Activated B cell treated with CpG ODN at 0.5 μM for 24 hours (primary cell): ENCODE measurements at regions of chr3 and their contacts with region 1.

Region 1: DNA sequence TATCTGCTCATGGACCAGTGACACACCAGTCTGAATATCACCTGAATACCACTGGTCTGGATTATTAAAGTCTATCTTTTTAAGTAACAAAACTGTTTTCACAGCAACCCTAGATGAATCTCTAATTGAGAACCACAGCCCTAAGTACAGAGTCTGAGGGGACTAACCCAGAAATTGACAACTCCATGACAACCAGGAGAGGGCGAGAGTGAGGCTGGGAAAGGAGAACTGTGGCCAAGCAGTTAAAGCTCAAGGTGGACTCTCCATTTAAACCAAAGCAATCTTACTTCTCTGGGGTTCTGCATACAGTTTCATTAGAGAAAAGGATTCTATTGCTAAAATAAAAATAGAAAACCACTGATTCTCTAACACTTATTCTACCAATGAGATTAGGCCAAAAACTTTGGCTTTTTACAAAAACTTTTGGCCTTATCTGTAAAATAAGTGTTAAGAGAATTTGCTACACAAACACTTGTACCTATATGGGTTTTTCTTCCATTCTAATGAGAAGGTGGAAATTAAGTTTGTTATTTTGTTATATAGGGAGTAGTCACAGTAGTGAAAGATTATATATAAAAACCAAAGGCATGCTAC is 11.4 kb downstream of the NEK10 start:
- DNase-seq: no peak
- ATAC-seq: peak; percentile 96
- H3K4me3 Mint-ChIP-seq: no peak overlapping the region
- H3K27ac Mint-ChIP-seq: no peak overlapping the region
- H3K4me1 Mint-ChIP-seq: peaks cover 37% of the 10 kb centered on the region
- H3K27me3 Mint-ChIP-seq: no peaks in the 10 kb centered on the region
- CTCF ChIP-seq: no peak

Region 2: GRCh38 chr3:27333843-27334242 is 23.9 kb before region 1 on chr3:
- CTCF ChIA-PET with region 1: no interaction called
- POLR2A ChIA-PET with region 1: no interaction called
- intact Hi-C with region 1: no loop called
- DNase-seq: no peak
- ATAC-seq: no peak
- H3K4me3 Mint-ChIP-seq: no peak overlapping the region
- H3K27ac Mint-ChIP-seq: no peak overlapping the region
- H3K4me1 Mint-ChIP-seq: no peaks in the 10 kb centered on the region
- H3K27me3 Mint-ChIP-seq: no peaks in the 10 kb centered on the region
- CTCF ChIP-seq: no peak

Region 3: DNA sequence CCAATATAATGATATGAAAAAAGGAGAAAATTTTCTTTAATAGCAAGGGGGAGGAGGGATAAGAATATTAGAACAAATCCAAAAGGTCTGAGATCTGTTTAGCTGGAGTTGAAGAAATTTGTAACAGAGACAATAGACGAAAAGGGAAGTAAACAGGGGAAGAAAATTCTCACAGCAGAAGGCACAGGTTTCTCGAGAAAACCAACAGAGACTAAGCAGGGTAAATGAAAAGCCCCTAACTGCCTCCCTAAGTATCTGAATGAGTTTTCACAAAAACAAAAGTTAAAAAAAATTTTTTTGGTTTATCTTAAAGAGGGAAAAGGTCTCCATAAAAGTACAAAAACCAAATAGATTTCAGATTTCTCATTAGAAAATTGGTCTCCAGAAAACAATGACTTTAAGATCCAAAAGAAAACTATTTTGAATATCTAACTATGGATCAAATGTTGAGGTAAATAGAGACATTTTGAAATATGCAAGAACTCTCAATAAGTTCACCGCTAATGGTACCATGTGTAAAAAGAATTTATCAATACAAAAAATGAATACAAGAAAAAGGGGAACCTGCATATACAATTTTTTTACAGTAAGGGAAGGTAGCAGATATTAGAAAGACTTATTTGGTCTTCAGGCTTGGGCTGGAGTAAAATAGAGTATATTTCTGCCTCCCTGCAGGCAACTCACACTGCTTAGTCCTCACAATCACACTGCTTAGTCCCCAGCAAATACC is 35.4 kb after region 1 on chr3:
- CTCF ChIA-PET with region 1: no interaction called
- POLR2A ChIA-PET with region 1: no interaction called
- intact Hi-C with region 1: loop called (anchors 5 kb)
- DNase-seq: no peak
- ATAC-seq: no peak
- H3K4me3 Mint-ChIP-seq: no peak overlapping the region
- H3K27ac Mint-ChIP-seq: peak overlapping the region; percentile 53
- H3K4me1 Mint-ChIP-seq: peaks cover 7% of the 10 kb centered on the region
- H3K27me3 Mint-ChIP-seq: no peaks in the 10 kb centered on the region
- CTCF ChIP-seq: no peak

Region 4: GRCh38 chr3:27659279-27660021 is 301.7 kb after region 1 on chr3:
- CTCF ChIA-PET with region 1: interaction called, 5 read pairs
- POLR2A ChIA-PET with region 1: no interaction called
- intact Hi-C with region 1: loop called (anchors 2 kb)
- DNase-seq: no peak
- ATAC-seq: peak; percentile 65
- H3K4me3 Mint-ChIP-seq: no peak overlapping the region
- H3K27ac Mint-ChIP-seq: no peak overlapping the region
- H3K4me1 Mint-ChIP-seq: peaks cover 7% of the 10 kb centered on the region
- H3K27me3 Mint-ChIP-seq: no peaks in the 10 kb centered on the region
- CTCF ChIP-seq: peak; percentile 33

Region 5: GRCh38 chr3:28241221-28242160 is 883.7 kb after region 1 on chr3 and contains the start of gene CMC1:
- CTCF ChIA-PET with region 1: no interaction called
- POLR2A ChIA-PET with region 1: no interaction called
- intact Hi-C with region 1: loop called (anchors 1 kb)
- DNase-seq: peak; percentile 88
- ATAC-seq: peak; percentile 94
- H3K4me3 Mint-ChIP-seq: peak within 1 kb of the TSS; percentile 98
- H3K27ac Mint-ChIP-seq: peak within 1 kb of the TSS; percentile 89
- H3K4me1 Mint-ChIP-seq: peaks cover 27% of the 10 kb centered on the region
- H3K27me3 Mint-ChIP-seq: no peaks in the 10 kb centered on the region
- CTCF ChIP-seq: no peak
- total RNA-seq, gene CMC1: 10.9 and 14.2 TPM in 2 replicates